Prostate gland (tissue), 2 donors: ENCODE measurements at regions of chr10 and their contacts with region 1.

Region 1: GRCh38 chr10:32190890-32191491 is 134.8 kb upstream of the KIF5B start:
- DNase-seq: no peak
- H3K4me3 ChIP-seq: no peak overlapping the region
- H3K27ac ChIP-seq: no peak overlapping the region
- H3K4me1 ChIP-seq: no peaks in the 10 kb centered on the region
- H3K27me3 ChIP-seq: no peaks in the 10 kb centered on the region
- CTCF ChIP-seq: peak; percentile 41 to 80 (median 71)
- POLR2A ChIP-seq: no peak

Region 2: GRCh38 chr10:32367793-32368453 is 176.9 kb after region 1 on chr10:
- intact Hi-C with region 1: loop called (anchors 5 kb)
- DNase-seq: peak; percentile 71
- H3K4me3 ChIP-seq: no peak overlapping the region
- H3K27ac ChIP-seq: no peak overlapping the region
- H3K4me1 ChIP-seq: no peaks in the 10 kb centered on the region
- H3K27me3 ChIP-seq: no peaks in the 10 kb centered on the region
- CTCF ChIP-seq: peak; percentile 74 to 87 (median 80)
- POLR2A ChIP-seq: no peak